ENCODE measurements at regions of chr1 and their contacts with region 1.

Region 1: GRCh38 chr1:24201941-24202440 is 14.9 kb upstream of the IFNLR1 start:
- DNase-seq: peak; percentile 62 to 91
- ATAC-seq: peak; percentile 85 to 94
- H3K4me3 ChIP-seq: no peak overlapping the region
- H3K27ac ChIP-seq: peak overlapping the region; percentile 84 to 86
- H3K4me1 ChIP-seq: peaks cover 22% of the 10 kb centered on the region
- CTCF ChIP-seq: peak; percentile 91
- EP300 ChIP-seq: no peak
- POLR2A ChIP-seq: no peak
- RAD21 ChIP-seq: peak; percentile 95 to 96

Region 2: GRCh38 chr1:24186993-24187805 is 14.8 kb before region 1 on chr1 and contains the start of gene IFNLR1:
- CTCF ChIA-PET with region 1: interaction called, 14 read pairs
- POLR2A ChIA-PET with region 1: no interaction called
- DNase-seq: peak; percentile 26 to 44
- ATAC-seq: peak; percentile 67 to 82
- H3K4me3 ChIP-seq: peak within 1 kb of the TSS; percentile 59
- H3K27ac ChIP-seq: peak within 1 kb of the TSS; percentile 67 to 92
- H3K4me1 ChIP-seq: peaks cover 25% of the 10 kb centered on the region
- CTCF ChIP-seq: no peak
- EP300 ChIP-seq: no peak
- POLR2A ChIP-seq: no peak
- RAD21 ChIP-seq: no peak
- polyA plus RNA-seq, gene IFNLR1: 1.3 and 1.7 TPM in 2 replicates

Region 3: GRCh38 chr1:24266398-24266941 is 64.5 kb after region 1 on chr1:
- CTCF ChIA-PET with region 1: interaction called, 15 read pairs
- POLR2A ChIA-PET with region 1: no interaction called
- DNase-seq: peak; percentile 60 to 88
- ATAC-seq: peak; percentile 92
- H3K4me3 ChIP-seq: no peak overlapping the region
- H3K27ac ChIP-seq: peak overlapping the region; percentile 19 to 70; a peak in 5 of 6 replicates
- H3K4me1 ChIP-seq: peaks cover 15% of the 10 kb centered on the region
- CTCF ChIP-seq: no peak
- EP300 ChIP-seq: peak in 1 of 2 experiments; percentile 29; a peak in 1 of 5 replicates
- POLR2A ChIP-seq: no peak
- RAD21 ChIP-seq: peak; percentile 22 to 30; a peak in 2 of 5 replicates

Region 4: GRCh38 chr1:24301785-24302175 is 99.8 kb after region 1 on chr1:
- CTCF ChIA-PET with region 1: interaction called, 20 read pairs
- POLR2A ChIA-PET with region 1: no interaction called
- DNase-seq: no peak
- ATAC-seq: no peak
- H3K4me3 ChIP-seq: no peak overlapping the region
- H3K27ac ChIP-seq: peak overlapping the region in 1 of 2 experiments; percentile 66; a peak in 2 of 6 replicates
- H3K4me1 ChIP-seq: peaks cover 12% of the 10 kb centered on the region
- CTCF ChIP-seq: no peak
- EP300 ChIP-seq: no peak
- POLR2A ChIP-seq: no peak
- RAD21 ChIP-seq: no peak

Region 5: DNA sequence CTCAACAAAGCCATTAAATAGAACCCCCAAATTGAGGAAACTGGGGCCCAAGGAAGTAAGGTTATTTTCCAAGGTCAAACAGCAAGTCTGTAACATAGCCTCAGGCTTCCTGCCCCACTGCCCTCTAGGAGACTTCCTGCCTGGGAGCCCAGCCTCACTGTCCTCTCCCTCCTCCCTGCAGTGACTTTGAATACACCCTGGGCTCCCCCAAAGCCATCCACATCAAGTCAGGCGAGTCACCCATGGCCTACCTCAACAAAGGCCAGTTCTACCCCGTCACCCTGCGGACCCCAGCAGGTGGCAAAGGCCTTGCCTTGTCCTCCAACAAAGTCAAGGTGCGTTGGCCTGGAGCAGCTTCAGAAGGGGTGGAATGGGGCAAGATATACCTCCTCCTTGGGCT is 135.5 kb after region 1 on chr1:
- CTCF ChIA-PET with region 1: interaction called, 10 read pairs
- POLR2A ChIA-PET with region 1: no interaction called
- DNase-seq: no peak
- ATAC-seq: no peak
- H3K4me3 ChIP-seq: no peak overlapping the region
- H3K27ac ChIP-seq: no peak overlapping the region
- H3K4me1 ChIP-seq: no peaks in the 10 kb centered on the region
- CTCF ChIP-seq: no peak
- EP300 ChIP-seq: no peak
- POLR2A ChIP-seq: no peak
- RAD21 ChIP-seq: no peak

Region 6: GRCh38 chr1:24374891-24375786 is 173.1 kb after region 1 on chr1:
- CTCF ChIA-PET with region 1: interaction called, 748 read pairs
- POLR2A ChIA-PET with region 1: interaction called, 12 read pairs
- DNase-seq: peak in 1 of 2 experiments; percentile 82
- ATAC-seq: peak; percentile 79 to 87; a peak in 5 of 6 replicates
- H3K4me3 ChIP-seq: no peak overlapping the region
- H3K27ac ChIP-seq: peak overlapping the region; percentile 81 to 83
- H3K4me1 ChIP-seq: peaks cover 24% of the 10 kb centered on the region
- CTCF ChIP-seq: no peak
- EP300 ChIP-seq: peak in 1 of 2 experiments; percentile 30; a peak in 1 of 5 replicates
- POLR2A ChIP-seq: no peak
- RAD21 ChIP-seq: 0 out of 5 replicates have a peak, but pooled peaks of 1 of the 2 experiments have one; percentile 4

Region 7: GRCh38 chr1:24635195-24635843 is 433.3 kb after region 1 on chr1:
- CTCF ChIA-PET with region 1: interaction called, 12 read pairs
- POLR2A ChIA-PET with region 1: no interaction called
- DNase-seq: peak; percentile 60 to 76
- ATAC-seq: peak; percentile 77 to 91; a peak in 5 of 6 replicates
- H3K4me3 ChIP-seq: no peak overlapping the region
- H3K27ac ChIP-seq: no peak overlapping the region
- H3K4me1 ChIP-seq: peaks cover 4% of the 10 kb centered on the region; the same call in 1 of the 3 replicates
- CTCF ChIP-seq: peak; percentile 69
- EP300 ChIP-seq: no peak
- POLR2A ChIP-seq: no peak
- RAD21 ChIP-seq: peak; percentile 74 to 81

Measured in A549 (cell line).